Breast epithelium (tissue), 4 donors: ENCODE measurements at regions of chr1 and their contacts with region 1.

Region 1: DNA sequence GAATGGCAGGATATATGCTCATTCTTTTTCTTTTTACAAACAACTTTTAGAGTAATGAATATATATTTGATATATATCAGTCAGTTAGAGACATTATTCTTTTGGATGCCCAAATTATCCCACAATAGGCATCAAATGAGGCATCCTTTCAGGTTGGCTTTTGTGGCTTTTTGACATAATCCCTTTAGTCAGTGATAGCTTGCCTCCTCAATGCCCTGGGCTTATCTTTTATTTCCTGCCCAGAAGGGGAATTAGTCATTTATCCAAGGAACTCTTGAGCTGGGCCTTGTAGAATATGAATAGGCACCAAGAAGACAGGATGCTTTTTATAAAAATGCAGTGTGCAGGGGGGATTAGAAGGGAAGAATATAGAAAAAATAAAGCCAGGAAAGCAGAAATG is 22.2 kb downstream of the EPHX4 start:
- DNase-seq: no peak
- H3K4me3 ChIP-seq: no peak overlapping the region
- H3K27ac ChIP-seq: no peak overlapping the region
- H3K4me1 ChIP-seq: no peaks in the 10 kb centered on the region
- H3K27me3 ChIP-seq: no peaks in the 10 kb centered on the region
- CTCF ChIP-seq: no peak
- POLR2A ChIP-seq: no peak

Region 2: DNA sequence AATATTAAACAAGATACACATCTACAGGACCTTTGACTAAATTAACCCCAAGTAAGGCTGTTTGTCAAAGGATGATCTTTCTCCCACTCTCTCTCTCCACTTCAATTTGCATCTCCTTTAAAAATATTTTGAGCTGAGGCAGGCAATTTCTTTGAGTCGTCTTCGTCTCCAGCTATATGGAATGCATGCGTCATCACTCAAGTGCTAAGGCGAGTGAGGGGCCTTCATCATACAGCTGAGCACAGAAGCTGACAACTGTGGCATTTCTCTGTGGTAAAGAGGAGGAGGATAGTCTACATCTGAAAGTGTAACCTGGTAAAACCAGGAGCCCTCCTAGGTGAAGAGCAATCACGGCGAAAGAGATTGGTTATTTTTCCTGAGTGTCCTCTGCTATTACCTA is 14.5 kb before region 1 on chr1:
- intact Hi-C with region 1: no loop called
- DNase-seq: no peak
- H3K4me3 ChIP-seq: no peak overlapping the region
- H3K27ac ChIP-seq: no peak overlapping the region
- H3K4me1 ChIP-seq: no peaks in the 10 kb centered on the region
- H3K27me3 ChIP-seq: no peaks in the 10 kb centered on the region
- CTCF ChIP-seq: no peak
- POLR2A ChIP-seq: no peak

Region 3: DNA sequence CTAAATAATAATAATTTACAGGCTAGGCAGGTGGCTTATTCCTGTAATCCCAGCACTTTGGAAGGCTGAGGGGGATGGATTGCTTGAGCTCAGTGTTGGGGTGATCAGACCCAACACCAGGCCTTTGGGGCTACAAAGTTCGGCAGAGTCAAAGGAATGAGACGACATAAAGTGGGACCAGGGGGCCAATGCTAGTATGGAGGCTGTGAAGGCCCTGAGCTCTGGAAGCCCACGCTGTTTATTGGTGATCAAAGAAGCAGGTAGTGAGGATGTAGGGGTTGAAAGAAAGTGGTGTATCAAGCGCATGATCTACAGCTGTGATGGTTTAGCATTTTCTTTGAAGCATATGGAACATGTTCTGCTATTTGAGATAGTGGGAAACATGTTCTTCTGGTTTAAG is 33.8 kb after region 1 on chr1:
- intact Hi-C with region 1: loop called (anchors 1 kb)
- DNase-seq: no peak
- H3K4me3 ChIP-seq: no peak overlapping the region
- H3K27ac ChIP-seq: no peak overlapping the region
- H3K4me1 ChIP-seq: no peaks in the 10 kb centered on the region
- H3K27me3 ChIP-seq: no peaks in the 10 kb centered on the region
- CTCF ChIP-seq: no peak
- POLR2A ChIP-seq: no peak

Region 4: GRCh38 chr1:92211166-92211565 is 159.2 kb after region 1 on chr1:
- intact Hi-C with region 1: no loop called
- DNase-seq: no peak
- H3K4me3 ChIP-seq: no peak overlapping the region
- H3K27ac ChIP-seq: no peak overlapping the region
- H3K4me1 ChIP-seq: no peaks in the 10 kb centered on the region
- H3K27me3 ChIP-seq: no peaks in the 10 kb centered on the region
- CTCF ChIP-seq: no peak
- POLR2A ChIP-seq: no peak